Activated CD4-positive, alpha-beta T cell treated with anti-CD3 and anti-CD28 coated beads, Interleukin-2, amount 10 ng/mL, durations not matched to agents 24 days and 14 days (primary cell): ENCODE measurements at regions of chr12 and their contacts with region 1.

Region 1: DNA sequence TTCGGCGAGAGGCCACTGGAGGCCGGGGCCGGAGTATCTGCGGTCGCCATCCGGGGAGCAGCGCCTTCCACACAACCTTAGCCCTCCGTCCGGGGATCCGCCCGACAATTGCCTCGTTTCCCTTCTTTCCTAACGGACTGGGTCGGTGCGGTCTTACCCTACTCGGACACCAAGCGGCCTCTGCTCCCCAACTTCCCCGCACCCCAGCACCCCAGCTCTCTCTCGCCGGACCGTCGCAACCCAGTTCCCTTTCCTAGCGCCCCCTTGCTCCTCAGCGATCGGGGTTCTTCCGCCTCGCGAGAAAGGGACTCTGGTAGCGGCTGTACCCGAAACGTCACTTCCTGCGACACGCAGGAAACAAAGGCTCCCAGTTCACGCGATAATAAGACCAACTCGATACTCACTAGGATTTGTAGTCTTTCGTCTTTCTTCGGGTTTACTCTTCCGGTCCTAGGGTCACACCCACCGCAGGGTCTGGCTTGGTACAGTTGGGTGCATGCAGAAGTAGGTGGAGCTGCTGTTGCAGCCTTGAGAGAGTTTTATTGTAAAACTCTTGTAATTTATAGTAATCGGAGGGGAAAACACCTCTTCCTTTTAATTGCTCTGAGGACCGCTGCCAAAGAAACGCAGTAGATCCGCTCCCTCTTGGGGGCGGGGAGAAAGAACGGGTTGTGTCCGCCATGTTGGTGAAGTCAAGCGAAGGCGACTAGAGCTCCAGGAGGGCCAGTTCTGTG is at the start of gene ZFC3H1:
- DNase-seq: peak; percentile 97
- H3K4me3 Mint-ChIP-seq: peak within 1 kb of the TSS; percentile 97
- H3K27ac Mint-ChIP-seq: peak within 1 kb of the TSS; percentile 99
- H3K4me1 Mint-ChIP-seq: peaks cover 29% of the 10 kb centered on the region
- H3K27me3 Mint-ChIP-seq: no peaks in the 10 kb centered on the region
- total RNA-seq, gene ZFC3H1: 63.3 and 64.6 TPM in 2 replicates

Region 2: GRCh38 chr12:69738351-69739286 is 1925.1 kb before region 1 on chr12 and contains the start of gene RAB3IP:
- intact Hi-C with region 1: loop called (anchors 2 kb)
- DNase-seq: peak; percentile 97
- H3K4me3 Mint-ChIP-seq: peak within 1 kb of the TSS; percentile 86
- H3K27ac Mint-ChIP-seq: peak within 1 kb of the TSS; percentile 76
- H3K4me1 Mint-ChIP-seq: peaks cover 15% of the 10 kb centered on the region
- H3K27me3 Mint-ChIP-seq: peaks cover 33% of the 10 kb centered on the region
- total RNA-seq, gene RAB3IP: 28.5 and 33.6 TPM in 2 replicates

Region 3: GRCh38 chr12:71642264-71642663 is 21.5 kb before region 1 on chr12:
- intact Hi-C with region 1: loop called (anchors 1 kb)
- DNase-seq: no peak
- H3K4me3 Mint-ChIP-seq: no peak overlapping the region
- H3K27ac Mint-ChIP-seq: no peak overlapping the region
- H3K4me1 Mint-ChIP-seq: peaks cover 22% of the 10 kb centered on the region
- H3K27me3 Mint-ChIP-seq: no peaks in the 10 kb centered on the region

Region 4: GRCh38 chr12:71685914-71686665 is 22.4 kb after region 1 on chr12 and contains the start of gene TMEM19:
- intact Hi-C with region 1: loop called (anchors 1 kb)
- DNase-seq: peak; percentile 94
- H3K4me3 Mint-ChIP-seq: peak within 1 kb of the TSS; percentile 92
- H3K27ac Mint-ChIP-seq: peak within 1 kb of the TSS; percentile 95
- H3K4me1 Mint-ChIP-seq: peaks cover 12% of the 10 kb centered on the region
- H3K27me3 Mint-ChIP-seq: no peaks in the 10 kb centered on the region
- total RNA-seq, gene TMEM19: 10.2 and 13.5 TPM in 2 replicates

Region 5: GRCh38 chr12:71746983-71747611 is 83.4 kb after region 1 on chr12:
- intact Hi-C with region 1: loop called (anchors 1 kb)
- DNase-seq: peak; percentile 84
- H3K4me3 Mint-ChIP-seq: no peak overlapping the region
- H3K27ac Mint-ChIP-seq: no peak overlapping the region
- H3K4me1 Mint-ChIP-seq: no peaks in the 10 kb centered on the region
- H3K27me3 Mint-ChIP-seq: peaks cover 36% of the 10 kb centered on the region

Region 6: GRCh38 chr12:71754461-71755145 is 90.9 kb after region 1 on chr12 and contains the start of gene RAB21:
- intact Hi-C with region 1: loop called (anchors 1 kb)
- DNase-seq: peak; percentile 99
- H3K4me3 Mint-ChIP-seq: peak within 1 kb of the TSS; percentile 93
- H3K27ac Mint-ChIP-seq: peak within 1 kb of the TSS; percentile 97
- H3K4me1 Mint-ChIP-seq: peaks cover 23% of the 10 kb centered on the region
- H3K27me3 Mint-ChIP-seq: peaks cover 25% of the 10 kb centered on the region
- total RNA-seq, gene RAB21: 91.7 and 92.4 TPM in 2 replicates

Region 7: DNA sequence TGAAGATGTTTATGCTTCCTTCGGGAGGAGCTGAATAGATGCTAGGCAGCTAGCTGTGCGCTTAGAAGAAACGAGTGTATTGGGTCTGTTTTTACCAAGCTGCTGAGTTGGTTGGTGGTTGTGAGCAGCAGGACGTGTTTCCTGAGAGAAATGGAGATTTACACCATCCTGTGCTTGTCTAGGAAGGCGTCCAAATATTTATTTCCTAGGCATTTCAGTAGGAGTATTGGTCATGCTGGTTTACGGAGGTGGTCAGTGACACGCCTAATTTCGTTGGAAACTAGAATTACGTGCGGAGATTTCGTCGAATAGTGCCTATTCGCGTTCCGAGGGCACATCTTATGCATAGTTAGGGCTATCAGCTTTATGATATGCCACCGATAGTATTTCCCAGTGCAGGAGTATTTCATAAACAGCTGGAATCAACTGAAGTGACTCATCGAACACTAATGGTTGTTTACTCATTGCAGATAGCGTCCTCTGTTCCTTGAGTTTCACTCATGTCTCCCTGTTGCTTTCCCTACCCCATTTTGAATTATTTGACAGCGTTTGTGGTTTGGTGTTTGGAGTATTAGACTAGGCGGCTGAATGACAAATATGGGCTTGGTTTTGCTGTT is 176.6 kb after region 1 on chr12:
- intact Hi-C with region 1: loop called (anchors 1 kb)
- DNase-seq: peak; percentile 78
- H3K4me3 Mint-ChIP-seq: peak overlapping the region; percentile 98
- H3K27ac Mint-ChIP-seq: peak overlapping the region; percentile 94
- H3K4me1 Mint-ChIP-seq: peaks cover 34% of the 10 kb centered on the region
- H3K27me3 Mint-ChIP-seq: no peaks in the 10 kb centered on the region

Region 8: GRCh38 chr12:72547573-72547972 is 883.8 kb after region 1 on chr12:
- intact Hi-C with region 1: no loop called
- DNase-seq: no peak
- H3K4me3 Mint-ChIP-seq: no peak overlapping the region
- H3K27ac Mint-ChIP-seq: no peak overlapping the region
- H3K4me1 Mint-ChIP-seq: no peaks in the 10 kb centered on the region
- H3K27me3 Mint-ChIP-seq: no peaks in the 10 kb centered on the region